ENCODE measurements at regions of chr20 and their contacts with region 1.

Region 1: GRCh38 chr20:36919715-36920333 is 31.7 kb downstream of the SAMHD1 start:
- DNase-seq: peak; percentile 70
- H3K4me3 Mint-ChIP-seq: no peak overlapping the region
- H3K27ac Mint-ChIP-seq: peak overlapping the region; percentile 62
- H3K4me1 Mint-ChIP-seq: peaks cover 10% of the 10 kb centered on the region
- H3K27me3 Mint-ChIP-seq: no peaks in the 10 kb centered on the region

Region 2: GRCh38 chr20:37032077-37032476 is 112.3 kb after region 1 on chr20:
- CTCF ChIA-PET with region 1: no interaction called
- POLR2A ChIA-PET with region 1: interaction called, 10 read pairs
- DNase-seq: no peak
- H3K4me3 Mint-ChIP-seq: no peak overlapping the region
- H3K27ac Mint-ChIP-seq: no peak overlapping the region
- H3K4me1 Mint-ChIP-seq: peaks cover 7% of the 10 kb centered on the region
- H3K27me3 Mint-ChIP-seq: no peaks in the 10 kb centered on the region

Region 3: DNA sequence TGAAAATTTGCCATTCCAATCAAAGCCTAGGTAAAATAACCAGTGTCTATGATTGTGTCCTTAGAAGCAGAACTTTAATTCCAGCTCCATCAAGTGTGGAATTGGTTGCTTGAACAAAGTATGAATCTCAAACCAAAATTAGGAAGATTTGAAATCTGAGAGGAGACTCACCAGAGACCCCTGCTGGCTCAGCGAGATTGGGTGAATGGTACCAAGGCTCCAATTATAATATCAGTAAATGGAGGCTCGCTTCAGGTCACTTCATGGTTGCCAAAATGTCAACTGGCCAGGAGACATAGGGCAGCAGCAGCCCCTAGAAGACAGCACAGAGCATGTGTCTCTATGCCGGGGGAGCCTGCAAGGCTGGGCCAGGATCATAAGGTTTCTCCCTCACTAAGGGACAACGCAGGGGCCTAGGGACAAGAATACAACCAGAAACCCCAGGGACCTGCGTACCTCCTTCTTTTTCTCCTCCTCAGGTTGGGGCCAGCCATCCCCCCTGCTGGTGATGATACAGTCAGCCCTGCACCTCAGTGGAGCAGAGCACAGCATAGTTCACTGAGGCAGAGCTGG is 162.0 kb after region 1 on chr20:
- CTCF ChIA-PET with region 1: no interaction called
- POLR2A ChIA-PET with region 1: interaction called, 12 read pairs
- DNase-seq: peak; percentile 62
- H3K4me3 Mint-ChIP-seq: no peak overlapping the region
- H3K27ac Mint-ChIP-seq: peak overlapping the region; percentile 72
- H3K4me1 Mint-ChIP-seq: peaks cover 38% of the 10 kb centered on the region
- H3K27me3 Mint-ChIP-seq: no peaks in the 10 kb centered on the region